MCF 10A (cell line): ENCODE measurements at regions of chr16 and their contacts with region 1.

Region 1: GRCh38 chr16:760545-761343 is at the start of gene MSLN:
- DNase-seq: peak; percentile 76
- H3K4me3 Mint-ChIP-seq: peak within 1 kb of the TSS; percentile 60
- H3K27ac Mint-ChIP-seq: peak within 1 kb of the TSS; percentile 61
- H3K4me1 Mint-ChIP-seq: peaks cover 10% of the 10 kb centered on the region
- H3K27me3 Mint-ChIP-seq: no peaks in the 10 kb centered on the region
- CTCF ChIP-seq: no peak
- total RNA-seq, gene MSLN: 18.1 and 25.2 TPM in 2 replicates

Region 2: DNA sequence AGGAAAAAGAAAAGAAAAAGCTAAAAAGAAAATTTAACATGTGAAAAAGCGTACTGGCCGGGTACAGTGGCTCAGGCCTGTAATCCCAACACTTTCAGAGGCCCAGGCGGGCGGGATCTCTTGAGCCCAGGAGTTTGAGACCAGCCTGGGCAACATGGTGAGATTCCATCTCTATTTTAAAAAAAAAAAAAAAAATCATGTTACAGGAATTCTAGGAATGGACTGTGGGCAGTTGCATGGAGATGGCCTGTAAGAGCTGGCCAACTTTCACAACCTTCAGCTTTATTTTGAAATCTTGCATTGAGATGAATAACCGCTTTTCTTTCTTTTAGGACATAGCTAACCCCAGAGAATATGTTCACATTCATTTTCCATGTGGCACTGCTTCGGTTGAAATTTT is 11.7 kb before region 1 on chr16:
- CTCF ChIA-PET with region 1: interaction called, 11 read pairs
- POLR2A ChIA-PET with region 1: interaction called, 26 read pairs
- intact Hi-C with region 1: no loop called
- DNase-seq: peak; percentile 56
- H3K4me3 Mint-ChIP-seq: no peak overlapping the region
- H3K27ac Mint-ChIP-seq: no peak overlapping the region
- H3K4me1 Mint-ChIP-seq: no peaks in the 10 kb centered on the region
- H3K27me3 Mint-ChIP-seq: no peaks in the 10 kb centered on the region
- CTCF ChIP-seq: no peak

Region 3: DNA sequence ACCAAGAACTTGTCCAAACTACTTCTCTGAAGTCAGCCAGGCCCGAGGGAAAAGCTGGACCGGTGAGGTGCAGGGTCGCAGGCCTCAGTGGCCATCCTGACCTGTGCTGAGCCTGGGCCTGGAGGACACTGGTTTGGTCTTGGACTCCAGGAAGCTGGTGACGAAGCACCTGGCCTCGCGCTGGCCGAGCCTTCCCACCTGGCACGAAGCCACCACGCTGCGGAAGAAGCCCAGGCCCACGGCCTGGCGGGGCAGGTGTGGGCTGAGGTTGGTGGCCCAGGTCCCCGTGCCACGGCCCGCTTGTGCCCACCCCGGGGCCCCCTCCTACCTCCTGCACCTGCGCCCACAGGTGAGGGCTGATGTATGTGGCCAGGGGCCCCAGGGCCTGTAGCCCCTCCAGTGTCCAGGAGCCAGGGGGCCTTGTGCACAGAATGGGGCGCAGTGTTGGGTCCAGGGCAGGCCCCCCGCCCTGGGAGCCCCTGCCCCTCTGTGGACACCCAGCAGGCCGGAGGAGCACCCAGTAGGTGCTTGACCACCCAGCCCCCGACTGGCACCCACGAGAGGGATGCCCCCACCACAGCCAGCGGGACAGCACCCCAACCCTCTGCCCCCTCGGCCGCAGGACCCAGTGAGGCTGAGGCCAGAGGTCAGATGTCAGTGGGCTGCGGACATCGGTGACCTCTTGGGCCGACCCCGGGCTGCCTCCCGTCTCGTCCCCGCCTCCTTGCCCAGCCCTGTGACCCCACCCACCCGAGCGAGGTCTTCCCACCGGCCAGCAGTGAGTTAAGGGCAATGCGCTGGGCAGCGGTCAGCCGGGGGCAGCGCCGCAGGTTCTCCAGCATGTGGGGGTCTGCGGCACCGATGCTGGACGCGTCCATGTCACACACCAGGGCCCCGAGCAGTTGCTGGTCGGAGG is 13.6 kb after region 1 on chr16:
- CTCF ChIA-PET with region 1: interaction called, 4 read pairs
- POLR2A ChIA-PET with region 1: interaction called, 23 read pairs
- intact Hi-C with region 1: no loop called
- DNase-seq: no peak
- H3K4me3 Mint-ChIP-seq: no peak overlapping the region
- H3K27ac Mint-ChIP-seq: no peak overlapping the region
- H3K4me1 Mint-ChIP-seq: no peaks in the 10 kb centered on the region
- H3K27me3 Mint-ChIP-seq: no peaks in the 10 kb centered on the region
- CTCF ChIP-seq: no peak

Region 4: GRCh38 chr16:807347-808084 is 46.8 kb after region 1 on chr16:
- CTCF ChIA-PET with region 1: no interaction called
- POLR2A ChIA-PET with region 1: no interaction called
- intact Hi-C with region 1: no loop called
- DNase-seq: peak; percentile 74
- H3K4me3 Mint-ChIP-seq: peak overlapping the region; percentile 91
- H3K27ac Mint-ChIP-seq: peak overlapping the region; percentile 66
- H3K4me1 Mint-ChIP-seq: no peaks in the 10 kb centered on the region
- H3K27me3 Mint-ChIP-seq: peaks cover 28% of the 10 kb centered on the region
- CTCF ChIP-seq: no peak